Activated CD8-positive, alpha-beta memory T cell treated with anti-CD3 and anti-CD28 coated beads, Interleukin-2, amount 10 ng/mL, durations not matched to agents 7 days and 5 days (primary cell): ENCODE measurements at regions of chr1 and their contacts with region 1.

Region 1: GRCh38 chr1:23634842-23635651 is 56.6 kb upstream of the RPL11 start:
- DNase-seq: peak; percentile 78
- ATAC-seq: peak; percentile 87
- H3K4me3 Mint-ChIP-seq: peak overlapping the region; percentile 48
- H3K27ac Mint-ChIP-seq: peak overlapping the region; percentile 54
- H3K4me1 Mint-ChIP-seq: peaks cover 19% of the 10 kb centered on the region
- H3K27me3 Mint-ChIP-seq: no peaks in the 10 kb centered on the region

Region 2: DNA sequence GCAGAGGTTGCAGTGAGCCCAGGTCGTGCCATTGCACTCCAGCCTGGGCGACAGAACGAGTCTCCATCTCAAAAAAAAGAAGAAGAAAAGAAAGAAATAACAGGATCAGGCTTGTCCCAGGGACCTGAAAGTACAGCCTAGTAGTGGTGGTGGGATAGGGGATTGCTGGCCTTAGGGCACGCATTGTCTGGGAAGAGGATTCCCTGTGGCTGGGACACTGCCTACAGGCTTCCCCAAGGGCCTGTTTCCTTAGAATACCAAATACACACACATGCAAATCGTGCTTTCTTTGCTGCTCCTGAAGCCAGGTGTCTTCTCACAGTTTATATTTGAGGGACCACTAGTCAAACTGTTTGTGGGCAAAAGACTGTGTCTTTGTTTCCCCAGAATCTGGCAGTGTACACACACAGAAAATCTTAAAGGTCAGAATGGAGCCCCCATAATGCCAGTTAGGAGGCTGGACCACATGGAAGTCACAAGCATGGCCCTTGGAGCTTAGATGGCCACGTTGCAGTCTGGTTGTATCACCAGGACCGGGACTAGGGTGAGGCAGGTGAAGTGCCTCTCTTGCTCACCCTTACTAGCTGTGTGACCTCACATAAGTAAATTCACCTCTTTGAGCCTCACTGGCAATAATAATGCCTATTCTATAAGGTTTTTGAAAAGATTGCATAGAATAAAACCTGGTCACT is 138.4 kb before region 1 on chr1:
- CTCF ChIA-PET with region 1: interaction called, 132 read pairs
- DNase-seq: no peak
- ATAC-seq: peak; percentile 39
- H3K4me3 Mint-ChIP-seq: no peak overlapping the region
- H3K27ac Mint-ChIP-seq: no peak overlapping the region
- H3K4me1 Mint-ChIP-seq: peaks cover 5% of the 10 kb centered on the region
- H3K27me3 Mint-ChIP-seq: peaks cover 2% of the 10 kb centered on the region

Region 3: GRCh38 chr1:23539698-23540266 is 95.3 kb before region 1 on chr1:
- CTCF ChIA-PET with region 1: interaction called, 753 read pairs
- DNase-seq: peak; percentile 97
- ATAC-seq: peak; percentile 96
- H3K4me3 Mint-ChIP-seq: peak overlapping the region; percentile 48
- H3K27ac Mint-ChIP-seq: peak overlapping the region; percentile 75
- H3K4me1 Mint-ChIP-seq: peaks cover 20% of the 10 kb centered on the region
- H3K27me3 Mint-ChIP-seq: peaks cover 12% of the 10 kb centered on the region

Region 4: GRCh38 chr1:23598424-23598823 is 36.6 kb before region 1 on chr1:
- CTCF ChIA-PET with region 1: interaction called, 87 read pairs
- DNase-seq: no peak
- ATAC-seq: no peak
- H3K4me3 Mint-ChIP-seq: no peak overlapping the region
- H3K27ac Mint-ChIP-seq: no peak overlapping the region
- H3K4me1 Mint-ChIP-seq: peaks cover 70% of the 10 kb centered on the region
- H3K27me3 Mint-ChIP-seq: no peaks in the 10 kb centered on the region

Region 5: GRCh38 chr1:23619299-23620188 is 15.5 kb before region 1 on chr1:
- CTCF ChIA-PET with region 1: interaction called, 114 read pairs
- DNase-seq: peak; percentile 81
- ATAC-seq: peak; percentile 82
- H3K4me3 Mint-ChIP-seq: peak overlapping the region; percentile 67
- H3K27ac Mint-ChIP-seq: peak overlapping the region; percentile 61
- H3K4me1 Mint-ChIP-seq: peaks cover 36% of the 10 kb centered on the region
- H3K27me3 Mint-ChIP-seq: peaks cover 11% of the 10 kb centered on the region

Region 6: GRCh38 chr1:23682946-23683345 is 47.9 kb after region 1 on chr1:
- CTCF ChIA-PET with region 1: no interaction called
- DNase-seq: no peak
- ATAC-seq: no peak
- H3K4me3 Mint-ChIP-seq: no peak overlapping the region
- H3K27ac Mint-ChIP-seq: no peak overlapping the region
- H3K4me1 Mint-ChIP-seq: no peaks in the 10 kb centered on the region
- H3K27me3 Mint-ChIP-seq: peaks cover 38% of the 10 kb centered on the region

Region 7: DNA sequence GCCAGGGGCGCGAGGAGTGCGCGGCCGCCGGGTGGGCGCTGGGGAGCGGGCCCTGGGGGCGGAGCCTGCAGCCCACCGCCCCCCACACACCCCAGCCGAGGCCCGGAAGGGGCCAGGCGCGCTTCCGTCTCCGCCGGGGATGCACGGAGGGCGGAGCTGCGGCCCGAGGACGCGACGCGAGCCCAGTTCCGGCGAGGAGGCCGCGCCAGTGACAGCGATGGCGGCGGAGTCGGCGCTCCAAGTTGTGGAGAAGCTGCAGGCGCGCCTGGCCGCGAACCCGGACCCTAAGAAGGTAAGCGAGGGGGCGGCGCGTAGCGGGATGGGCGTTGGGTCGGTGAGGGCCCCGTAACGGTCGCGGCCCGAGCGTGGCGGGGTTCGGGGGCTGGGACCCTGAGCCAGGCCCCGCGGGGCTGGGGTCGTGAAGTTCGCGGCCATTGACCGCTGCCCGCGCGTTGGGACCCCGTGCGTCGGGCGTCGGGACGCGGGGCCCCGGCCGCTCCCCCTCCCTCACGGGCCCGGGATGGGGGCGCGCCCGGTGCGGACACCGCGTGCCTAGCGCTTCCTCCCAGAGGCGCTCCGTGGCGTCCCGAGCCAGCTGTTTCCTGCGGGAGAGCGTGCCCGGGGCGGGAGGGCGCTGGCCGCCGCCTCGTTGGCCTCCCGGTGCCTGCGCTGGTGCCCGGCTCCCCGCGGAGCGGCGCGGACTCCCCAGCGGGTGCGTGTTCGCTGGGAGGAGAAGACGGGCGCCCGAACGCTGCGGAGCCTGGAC is 108.4 kb after region 1 on chr1 and contains the start of gene ELOA:
- CTCF ChIA-PET with region 1: interaction called, 11 read pairs
- DNase-seq: peak; percentile 87
- ATAC-seq: peak; percentile 95
- H3K4me3 Mint-ChIP-seq: peak within 1 kb of the TSS; percentile 85
- H3K27ac Mint-ChIP-seq: peak within 1 kb of the TSS; percentile 92
- H3K4me1 Mint-ChIP-seq: peaks cover 45% of the 10 kb centered on the region
- H3K27me3 Mint-ChIP-seq: no peaks in the 10 kb centered on the region
- total RNA-seq, gene ELOA: 30.1 to 40.7 TPM

Region 8: DNA sequence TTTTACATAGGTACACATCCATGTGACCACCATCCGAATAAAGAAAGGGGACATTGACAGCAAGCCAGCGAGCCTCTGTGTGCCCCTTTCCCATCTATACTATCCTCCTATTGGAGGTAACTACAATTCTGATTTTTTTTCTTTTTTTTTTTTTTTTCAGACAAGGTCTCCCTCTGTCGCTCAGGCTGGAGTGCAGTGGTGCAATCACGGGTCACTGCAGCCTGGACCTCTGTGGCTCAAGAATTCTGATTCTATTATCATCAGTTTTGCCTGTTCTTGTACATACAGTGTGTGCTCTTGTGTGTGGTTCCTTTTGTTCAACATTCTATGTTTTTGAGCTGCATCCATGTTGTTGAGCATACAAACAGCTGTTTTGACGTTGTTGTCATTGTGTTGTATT is 401.0 kb after region 1 on chr1:
- CTCF ChIA-PET with region 1: no interaction called
- DNase-seq: no peak
- ATAC-seq: no peak
- H3K4me3 Mint-ChIP-seq: no peak overlapping the region
- H3K27ac Mint-ChIP-seq: no peak overlapping the region
- H3K4me1 Mint-ChIP-seq: peaks cover 3% of the 10 kb centered on the region
- H3K27me3 Mint-ChIP-seq: peaks cover 23% of the 10 kb centered on the region